Left cardiac atrium (tissue), 4 donors: ENCODE measurements at regions of chr11 and their contacts with region 1.

Region 1: DNA sequence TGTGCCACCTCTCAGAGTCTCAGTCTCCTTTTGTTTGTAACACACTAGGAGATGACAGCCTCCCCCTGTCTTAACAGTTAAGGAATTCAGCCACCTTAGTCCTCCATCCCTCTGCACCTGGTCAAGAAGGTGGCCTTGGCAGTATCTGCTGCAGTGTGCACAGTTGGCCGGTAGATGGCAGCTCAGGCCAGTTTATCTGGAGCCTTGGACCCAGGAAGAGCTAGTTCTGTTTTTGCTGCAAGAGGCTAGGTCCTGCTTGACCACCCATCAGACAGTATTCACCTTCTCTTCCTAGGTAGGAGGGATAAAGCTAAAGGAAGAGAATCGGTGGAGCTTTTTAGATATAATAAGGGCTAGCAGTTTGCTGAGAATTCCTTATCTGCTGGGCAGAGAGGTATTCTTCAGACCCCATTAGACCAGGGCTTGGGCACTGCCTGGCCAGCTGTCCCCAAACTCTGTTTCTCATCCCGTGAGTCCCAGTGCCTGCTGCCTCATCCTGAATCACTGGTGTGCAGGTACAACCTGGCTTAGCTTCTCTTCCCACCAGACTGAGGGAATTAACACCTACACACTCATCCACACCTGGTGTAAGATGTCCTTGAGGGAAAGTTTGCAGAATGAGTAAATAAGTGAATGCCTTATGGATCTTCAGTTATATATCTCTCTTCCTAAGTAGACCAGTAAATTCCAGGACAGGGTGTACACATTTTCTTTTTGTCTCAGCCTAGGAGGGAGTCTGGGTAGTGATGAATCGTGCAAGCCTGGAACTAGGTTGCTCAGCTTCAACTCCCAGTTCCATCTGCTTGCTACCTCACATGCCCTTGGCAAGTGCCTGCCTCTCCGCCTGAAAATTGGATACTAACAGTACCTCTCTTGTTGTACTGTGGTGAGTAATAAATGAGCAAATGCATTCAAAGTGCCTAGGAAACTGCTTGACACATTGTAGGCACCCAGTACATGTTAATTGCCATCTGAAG is 70.8 kb upstream of the NARS2 start:
- DNase-seq: peak; percentile 53
- ATAC-seq: peak; percentile 79 to 88

Region 2: GRCh38 chr11:78961247-78961646 is 315.7 kb after region 1 on chr11:
- intact Hi-C with region 1: loop called (anchors 2 to 5 kb)
- DNase-seq: no peak
- ATAC-seq: peak; percentile 47 to 82

Region 3: DNA sequence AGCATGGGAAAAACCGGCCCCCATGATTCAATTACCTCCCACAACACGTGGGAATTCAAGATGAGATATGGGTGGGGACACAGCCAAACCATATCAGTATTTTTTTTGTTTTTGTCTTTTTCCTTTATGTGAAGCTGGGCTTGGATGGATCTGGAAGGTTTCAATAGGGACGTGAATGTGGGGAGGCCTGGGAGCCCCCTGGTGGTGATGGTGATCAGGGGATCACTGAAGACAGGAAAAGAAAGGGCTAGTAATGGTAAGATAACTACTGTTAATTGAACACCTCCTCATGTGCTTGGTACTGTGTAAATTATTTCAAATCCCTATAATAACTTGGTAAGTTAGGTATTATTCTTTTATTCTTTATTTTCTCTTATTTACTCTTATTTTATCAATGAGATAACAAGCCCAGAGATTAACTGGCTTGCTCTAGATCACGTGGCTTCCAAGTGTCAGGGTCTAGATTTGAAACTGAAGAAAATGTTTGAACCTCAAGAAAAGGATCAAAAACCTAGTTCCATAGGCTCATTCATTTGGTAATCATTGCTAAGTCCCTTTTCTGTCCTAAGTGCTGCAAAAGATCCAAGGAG is 431.1 kb after region 1 on chr11:
- intact Hi-C with region 1: loop called (anchors 10 kb)
- DNase-seq: peak; percentile 57
- ATAC-seq: peak; percentile 26 to 57

Region 4: GRCh38 chr11:79159657-79160450 is 514.3 kb after region 1 on chr11:
- intact Hi-C with region 1: loop called in 1 of 2 experiments (anchors 5 kb)
- DNase-seq: no peak
- ATAC-seq: no peak

Region 5: DNA sequence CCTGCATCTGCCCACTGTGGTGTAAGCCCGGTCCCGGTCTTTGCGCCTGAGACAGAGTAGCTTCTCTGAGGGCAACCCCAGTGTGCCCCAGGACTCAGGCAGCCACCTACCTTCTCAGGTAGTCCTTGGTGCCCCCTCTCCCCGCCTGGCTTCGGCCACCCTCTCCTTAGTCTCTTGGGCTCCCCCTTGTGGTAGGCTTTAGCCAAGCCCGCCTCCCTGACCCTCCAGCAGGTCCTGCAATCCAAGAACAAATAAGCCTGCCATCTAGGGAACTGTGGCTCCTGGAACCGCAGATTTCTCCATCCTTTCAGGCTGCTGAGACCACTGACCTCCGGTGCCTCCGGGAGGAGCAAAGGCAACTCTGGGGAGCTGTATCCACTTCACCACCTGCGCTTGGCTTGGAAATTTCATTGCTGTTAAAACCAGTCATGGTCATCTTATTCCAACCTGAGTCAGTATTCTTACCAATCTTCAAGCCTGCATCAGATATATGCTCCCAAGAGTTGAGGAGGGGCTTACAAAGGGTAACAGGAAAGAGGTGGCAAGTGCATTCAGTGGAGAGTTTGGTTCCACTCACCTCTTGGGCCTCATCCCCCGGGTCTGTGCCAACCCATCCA is 848.1 kb after region 1 on chr11:
- intact Hi-C with region 1: loop called in 1 of 2 experiments (anchors 5 kb)
- DNase-seq: peak; percentile 62
- ATAC-seq: peak; percentile 81 to 88